ENCODE measurements at regions of chr14 and their contacts with region 1.

Region 1: GRCh38 chr14:81178063-81178462 is 42.7 kb downstream of the GTF2A1 start:
- DNase-seq: peak in 1 of 3 donors; percentile 15
- H3K4me3 ChIP-seq: peak overlapping the region in 2 of 7 experiments; percentile 51 to 62
- H3K27ac ChIP-seq: peak overlapping the region; percentile 6 to 51
- H3K4me1 ChIP-seq: peaks cover 0 to 19% (median 10%) of the 10 kb centered on the region in 4 experiments
- H3K27me3 ChIP-seq: no peaks in the 10 kb centered on the region

Region 2: DNA sequence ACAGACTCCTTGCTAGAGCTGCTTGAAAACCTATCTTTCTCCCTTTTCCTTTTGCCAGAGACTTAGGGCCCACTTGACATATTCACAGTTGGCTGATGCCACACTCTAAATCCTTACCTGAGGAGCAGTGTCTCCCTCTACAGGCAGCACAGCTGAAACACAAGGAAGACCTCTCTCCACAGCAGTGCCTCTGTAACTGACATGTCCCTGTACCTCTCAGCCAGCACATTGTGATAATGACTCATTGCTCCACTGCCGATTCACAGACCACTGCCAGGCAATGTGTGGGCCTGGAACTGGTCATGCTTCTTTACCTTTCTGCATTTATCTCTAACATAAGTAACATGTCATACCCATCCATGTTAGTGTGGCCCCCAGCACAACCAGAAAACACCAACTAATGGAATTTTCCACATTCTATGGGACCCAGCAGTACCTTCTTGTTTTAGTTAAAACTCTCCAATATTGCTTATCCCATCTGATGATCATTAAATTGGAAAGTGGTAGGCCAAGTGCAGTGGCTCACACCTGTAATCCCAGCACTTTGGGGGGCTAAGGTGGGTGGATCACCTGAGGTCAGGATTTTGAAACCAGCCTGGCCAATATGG is 13.8 kb before region 1 on chr14:
- CTCF ChIA-PET with region 1: interaction called, 27 read pairs
- POLR2A ChIA-PET with region 1: no interaction called
- DNase-seq: peak; percentile 34 to 73 (median 66)
- H3K4me3 ChIP-seq: no peak overlapping the region
- H3K27ac ChIP-seq: no peak overlapping the region
- H3K4me1 ChIP-seq: peaks cover 2 to 20% (median 5%) of the 10 kb centered on the region in 4 experiments
- H3K27me3 ChIP-seq: no peaks in the 10 kb centered on the region

Region 3: DNA sequence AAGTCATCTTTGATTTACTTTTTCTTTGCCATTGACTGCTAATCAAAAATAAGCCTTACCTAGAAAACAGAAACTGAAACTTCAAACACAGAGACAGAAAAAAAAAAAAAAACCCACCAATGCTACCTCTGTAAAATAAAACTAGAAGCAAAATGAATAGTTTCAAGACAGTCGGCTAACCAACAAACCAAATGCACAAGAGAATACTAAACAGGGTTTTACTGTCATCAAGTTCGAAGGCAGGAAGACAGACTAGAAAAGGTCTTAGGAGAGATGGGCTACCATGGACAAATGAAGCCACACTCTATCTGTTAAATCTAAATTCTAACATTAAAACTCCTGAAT is 296.1 kb after region 1 on chr14:
- CTCF ChIA-PET with region 1: no interaction called
- POLR2A ChIA-PET with region 1: no interaction called
- DNase-seq: peak; percentile 25 to 48 (median 46)
- H3K4me3 ChIP-seq: peak overlapping the region in 6 of 7 experiments; percentile 13 to 64 (median 54)
- H3K27ac ChIP-seq: peak overlapping the region in 1 of 2 experiments; percentile 70
- H3K4me1 ChIP-seq: peaks cover 0 to 22% (median 7%) of the 10 kb centered on the region in 4 experiments
- H3K27me3 ChIP-seq: no peaks in the 10 kb centered on the region